Adrenal gland (tissue), 19 donors: ENCODE measurements at regions of chr18 and their contacts with region 1.

Region 1: DNA sequence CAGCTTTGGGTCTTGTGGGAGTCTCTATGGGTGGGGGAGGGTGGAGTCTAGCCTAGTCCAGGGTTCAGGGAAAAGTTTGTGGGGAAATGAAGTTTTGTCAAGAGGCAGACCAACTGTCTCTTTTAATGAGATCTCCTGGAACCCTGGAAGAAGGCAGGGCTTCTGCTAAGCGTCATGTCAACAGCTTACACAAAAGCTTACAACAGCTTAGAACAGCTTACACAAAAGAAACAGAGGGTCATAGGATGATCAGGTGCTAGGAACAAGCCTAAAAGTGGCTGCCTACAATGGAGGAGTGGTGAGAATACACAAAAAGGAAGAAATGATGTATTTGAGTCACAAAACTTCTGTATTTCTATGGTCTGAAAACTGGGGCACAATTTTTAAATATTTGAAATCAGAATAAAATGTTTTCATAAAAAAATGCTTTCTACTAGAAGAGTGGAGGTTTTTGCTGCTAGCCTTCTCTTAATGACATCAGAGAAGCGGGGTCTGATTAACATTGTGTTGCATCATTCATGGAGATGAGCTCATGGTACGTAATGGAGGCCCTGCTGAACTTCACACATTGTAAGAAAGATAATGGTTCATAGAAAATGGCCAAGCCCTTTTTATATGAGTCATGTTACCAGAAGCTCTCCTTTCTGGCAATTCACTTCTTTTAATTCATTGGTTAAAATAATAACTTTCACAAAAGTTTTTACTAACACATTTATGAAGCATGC is 351.0 kb downstream of the PIK3C3 start:
- DNase-seq: no peak
- H3K4me3 ChIP-seq: no peak overlapping the region
- H3K27ac ChIP-seq: no peak overlapping the region
- H3K4me1 ChIP-seq: no peaks in the 10 kb centered on the region
- H3K27me3 ChIP-seq: no peaks in the 10 kb centered on the region
- CTCF ChIP-seq: no peak
- POLR2A ChIP-seq: no peak

Region 2: GRCh38 chr18:42365591-42365990 is 59.6 kb after region 1 on chr18:
- intact Hi-C with region 1: loop called in 1 of 2 experiments (anchors 10 kb)
- DNase-seq: no peak
- H3K4me3 ChIP-seq: no peak overlapping the region
- H3K27ac ChIP-seq: no peak overlapping the region
- H3K4me1 ChIP-seq: no peaks in the 10 kb centered on the region
- H3K27me3 ChIP-seq: no peaks in the 10 kb centered on the region
- CTCF ChIP-seq: no peak
- POLR2A ChIP-seq: no peak